ENCODE measurements at regions of chr2 and their contacts with region 1.

Region 1: DNA sequence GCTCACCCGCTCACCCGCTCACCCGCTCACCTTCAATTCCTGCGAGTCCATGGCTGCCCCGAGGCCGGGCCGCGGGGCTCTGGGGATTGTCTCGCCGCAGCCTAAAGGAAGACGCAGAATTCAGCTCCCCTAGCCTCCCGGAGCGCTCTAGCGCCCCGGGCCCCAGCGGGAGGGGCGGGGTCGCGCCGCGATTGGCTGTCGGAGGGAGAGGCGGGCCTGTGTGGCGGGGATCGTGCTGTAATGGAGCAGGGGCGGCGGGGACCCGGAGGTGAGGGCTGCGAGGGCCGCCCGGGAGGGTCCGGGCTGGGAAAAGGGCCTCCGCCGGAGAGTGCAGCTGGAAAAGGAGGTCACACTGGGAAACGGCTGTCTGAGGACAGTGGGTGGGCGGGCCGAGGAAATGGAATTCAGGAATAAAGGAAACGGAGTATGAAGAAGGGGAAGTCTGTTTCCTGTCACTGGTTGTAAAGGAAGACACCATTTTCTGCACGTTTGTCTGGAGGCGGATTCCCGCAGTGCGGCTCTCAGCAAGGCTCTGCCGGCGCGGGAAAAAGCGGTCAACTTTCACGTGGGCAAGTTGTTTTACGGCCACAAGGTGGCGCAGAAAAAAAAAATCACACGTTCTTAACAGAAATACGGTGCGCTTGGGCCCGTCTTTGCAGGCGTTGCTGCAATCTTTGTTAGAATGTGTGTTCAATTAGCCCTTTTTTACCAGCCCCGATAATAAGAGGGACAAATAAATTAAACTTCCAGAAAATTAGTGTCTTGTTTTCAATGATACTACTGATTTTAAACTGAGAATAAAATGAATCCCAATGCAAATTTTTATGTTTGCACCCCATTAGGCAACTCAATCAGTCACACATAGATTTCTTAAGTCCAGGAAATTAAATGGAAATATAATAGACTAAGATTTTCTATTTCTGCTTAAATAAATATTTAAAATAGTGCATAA is at the start of gene TTC21B:
- DNase-seq: peak; percentile 91 to 99 (median 96)

Region 2: GRCh38 chr2:165114346-165114939 is 839.5 kb before region 1 on chr2:
- intact Hi-C with region 1: no loop called
- DNase-seq: no peak

Region 3: GRCh38 chr2:165627470-165627869 is 326.5 kb before region 1 on chr2:
- intact Hi-C with region 1: no loop called
- DNase-seq: no peak

Region 4: GRCh38 chr2:166127217-166128155 is 173.6 kb after region 1 on chr2 and contains the start of gene SCN1A:
- intact Hi-C with region 1: loop called (anchors 2 kb)
- DNase-seq: peak in 5 of 10 donors; percentile 17 to 86 (median 36)

Region 5: GRCh38 chr2:166180951-166181812 is 227.3 kb after region 1 on chr2:
- intact Hi-C with region 1: loop called (anchors 10 kb)
- DNase-seq: peak in 9 of 10 donors; percentile 31 to 90 (median 59)